Right ventricle myocardium inferior (tissue), 1 donor: ENCODE measurements at regions of chr16 and their contacts with region 1.

Region 1: GRCh38 chr16:70679666-70680494 is 6.0 kb downstream of the MTSS2 start:
- DNase-seq: peak; percentile 68
- ATAC-seq: peak; percentile 34

Region 2: GRCh38 chr16:70490261-70490803 is 189.5 kb before region 1 on chr16:
- intact Hi-C with region 1: no loop called
- DNase-seq: no peak
- ATAC-seq: peak; percentile 26

Region 3: GRCh38 chr16:70589998-70590471 is 89.8 kb before region 1 on chr16:
- intact Hi-C with region 1: no loop called
- DNase-seq: no peak
- ATAC-seq: peak; percentile 54

Region 4: DNA sequence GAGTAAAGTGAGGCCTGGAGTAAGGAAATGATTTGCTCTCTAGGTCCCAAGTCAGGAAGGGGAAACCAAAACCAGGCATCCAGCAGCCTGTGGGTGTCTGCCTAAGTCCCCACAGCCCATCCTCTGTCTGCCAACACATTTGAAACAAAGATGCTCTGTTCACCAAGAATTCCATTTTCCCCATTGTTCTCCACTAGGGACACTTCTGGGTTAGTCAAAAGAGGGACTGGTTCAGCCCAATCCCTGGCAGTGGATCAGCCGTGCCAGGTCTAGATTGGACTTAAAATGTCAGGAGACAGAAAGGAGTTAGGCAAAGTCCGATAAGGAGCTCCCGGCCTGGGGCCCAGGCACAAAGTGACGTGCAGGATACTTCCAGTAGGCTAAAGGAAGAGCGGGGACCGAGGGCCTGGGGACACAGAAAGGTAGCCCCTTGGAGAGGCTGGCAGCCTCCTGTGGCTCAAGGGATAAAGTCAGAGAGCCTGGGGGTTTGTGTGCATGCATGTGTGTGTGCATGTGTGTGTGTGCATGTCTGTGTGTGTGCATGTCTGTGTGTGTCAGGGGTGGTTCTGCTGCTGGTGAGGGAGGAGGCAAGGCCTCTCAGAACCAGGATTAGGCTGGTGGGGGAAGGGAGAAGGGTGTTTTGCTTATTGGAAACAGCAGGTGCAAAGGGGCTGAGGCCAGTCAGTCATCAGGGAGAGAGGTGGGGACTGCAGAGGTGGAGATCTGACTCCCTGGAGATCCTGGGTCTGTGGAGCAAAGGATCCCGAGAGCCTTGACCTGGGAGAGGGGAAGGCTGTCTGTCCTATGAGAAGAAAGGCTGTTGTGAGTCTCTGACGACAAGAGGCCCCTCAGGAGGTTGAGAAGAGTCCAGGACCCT is 75.2 kb before region 1 on chr16:
- intact Hi-C with region 1: no loop called
- DNase-seq: no peak
- ATAC-seq: no peak

Region 5: DNA sequence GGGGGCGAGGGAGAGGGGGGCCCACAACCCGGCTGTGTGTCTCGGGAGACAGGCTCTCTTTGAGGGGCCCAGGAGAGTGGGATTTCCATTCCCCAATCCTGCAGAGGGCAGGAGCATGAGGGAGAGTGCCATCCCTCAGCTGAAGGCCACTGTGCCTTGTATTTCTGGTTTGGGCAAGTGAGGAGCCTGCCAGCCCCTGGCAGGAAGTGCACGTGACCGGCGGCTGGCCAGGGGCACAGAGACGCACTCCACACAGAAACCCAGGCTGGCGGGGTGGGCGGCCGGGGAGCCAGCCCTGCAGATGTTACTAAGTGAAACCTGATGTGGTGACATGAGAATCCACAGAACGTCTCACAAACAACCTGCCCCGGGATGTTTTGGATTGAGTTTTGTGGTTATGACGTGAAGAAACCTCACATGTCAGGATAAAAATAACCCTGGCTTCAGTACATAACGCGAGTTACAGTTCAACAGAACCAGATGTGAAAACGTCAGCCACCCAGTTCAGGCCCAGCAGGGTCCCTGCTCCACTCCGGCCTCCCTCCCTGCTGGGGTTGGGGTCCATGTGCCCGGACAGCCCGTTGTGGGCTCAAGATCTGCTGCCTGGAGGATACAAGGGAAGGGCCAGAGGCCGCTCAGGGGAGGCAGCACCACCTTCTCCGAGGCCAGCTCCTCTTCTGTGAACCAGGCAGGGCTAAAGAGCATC is 57.6 kb after region 1 on chr16:
- intact Hi-C with region 1: loop called (anchors 2 kb)
- DNase-seq: peak; percentile 86
- ATAC-seq: peak; percentile 75

Region 6: DNA sequence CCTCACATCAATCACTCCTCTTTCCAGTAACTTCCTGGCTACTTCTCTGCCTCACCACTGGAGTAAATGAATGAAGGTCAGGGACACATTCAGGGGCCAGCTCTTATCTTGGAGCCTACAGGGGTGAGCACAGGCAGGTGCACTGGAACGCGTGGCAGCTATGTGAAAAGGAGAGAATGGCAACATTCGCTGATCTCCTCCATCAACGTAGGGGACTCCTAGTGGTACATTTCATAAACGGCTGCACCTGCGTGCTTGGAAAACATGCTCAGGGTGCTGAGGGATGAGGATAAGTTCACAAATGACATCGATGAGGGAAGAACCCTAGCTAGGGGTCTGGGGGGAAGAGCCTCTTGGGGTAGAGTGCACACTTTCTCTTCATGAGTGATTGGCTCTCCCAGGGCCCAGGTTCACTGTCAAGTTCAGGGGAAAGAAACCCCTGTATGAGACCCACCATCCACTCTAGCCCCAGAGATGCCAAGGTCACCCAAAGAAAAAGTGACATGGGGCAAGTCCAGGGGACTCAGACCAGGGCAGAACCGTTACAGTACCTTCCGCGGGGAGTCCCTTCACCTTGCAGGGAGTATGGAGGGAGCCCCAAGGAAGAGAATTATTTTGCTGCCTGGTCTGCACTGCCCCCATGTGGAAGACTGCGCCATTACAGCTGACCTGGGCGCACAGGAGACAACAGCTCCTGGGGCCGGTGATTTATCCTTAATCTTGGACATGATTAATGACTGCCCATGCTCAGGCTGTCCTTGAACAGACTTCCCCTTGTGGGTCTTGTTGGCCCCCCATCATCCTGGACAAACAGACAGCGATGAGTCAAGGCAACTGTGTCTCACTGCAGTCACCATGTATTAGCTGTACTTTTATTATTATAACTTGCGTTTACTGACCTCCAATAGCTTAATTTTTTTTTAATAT is 91.0 kb after region 1 on chr16:
- intact Hi-C with region 1: loop called (anchors 2 kb)
- DNase-seq: no peak
- ATAC-seq: peak; percentile 68